Esophagus muscularis mucosa (tissue), 4 donors: ENCODE measurements at regions of chr7 and their contacts with region 1.

Region 1: GRCh38 chr7:123709525-123709924 is 39.3 kb downstream of the WASL start:
- DNase-seq: no peak
- H3K4me3 ChIP-seq: no peak overlapping the region
- H3K27ac ChIP-seq: no peak overlapping the region
- H3K4me1 ChIP-seq: peaks cover 19 to 31% (median 27%) of the 10 kb centered on the region in 4 donors
- H3K27me3 ChIP-seq: no peaks in the 10 kb centered on the region
- CTCF ChIP-seq: no peak
- EP300 ChIP-seq: no peak
- POLR2A ChIP-seq: no peak

Region 2: GRCh38 chr7:123437447-123437995 is 272.0 kb before region 1 on chr7:
- intact Hi-C with region 1: no loop called
- DNase-seq: no peak
- H3K4me3 ChIP-seq: no peak overlapping the region
- H3K27ac ChIP-seq: no peak overlapping the region
- H3K4me1 ChIP-seq: peaks cover 0 to 15% (median 9%) of the 10 kb centered on the region in 4 donors
- H3K27me3 ChIP-seq: no peaks in the 10 kb centered on the region
- CTCF ChIP-seq: no peak
- EP300 ChIP-seq: no peak
- POLR2A ChIP-seq: no peak

Region 3: DNA sequence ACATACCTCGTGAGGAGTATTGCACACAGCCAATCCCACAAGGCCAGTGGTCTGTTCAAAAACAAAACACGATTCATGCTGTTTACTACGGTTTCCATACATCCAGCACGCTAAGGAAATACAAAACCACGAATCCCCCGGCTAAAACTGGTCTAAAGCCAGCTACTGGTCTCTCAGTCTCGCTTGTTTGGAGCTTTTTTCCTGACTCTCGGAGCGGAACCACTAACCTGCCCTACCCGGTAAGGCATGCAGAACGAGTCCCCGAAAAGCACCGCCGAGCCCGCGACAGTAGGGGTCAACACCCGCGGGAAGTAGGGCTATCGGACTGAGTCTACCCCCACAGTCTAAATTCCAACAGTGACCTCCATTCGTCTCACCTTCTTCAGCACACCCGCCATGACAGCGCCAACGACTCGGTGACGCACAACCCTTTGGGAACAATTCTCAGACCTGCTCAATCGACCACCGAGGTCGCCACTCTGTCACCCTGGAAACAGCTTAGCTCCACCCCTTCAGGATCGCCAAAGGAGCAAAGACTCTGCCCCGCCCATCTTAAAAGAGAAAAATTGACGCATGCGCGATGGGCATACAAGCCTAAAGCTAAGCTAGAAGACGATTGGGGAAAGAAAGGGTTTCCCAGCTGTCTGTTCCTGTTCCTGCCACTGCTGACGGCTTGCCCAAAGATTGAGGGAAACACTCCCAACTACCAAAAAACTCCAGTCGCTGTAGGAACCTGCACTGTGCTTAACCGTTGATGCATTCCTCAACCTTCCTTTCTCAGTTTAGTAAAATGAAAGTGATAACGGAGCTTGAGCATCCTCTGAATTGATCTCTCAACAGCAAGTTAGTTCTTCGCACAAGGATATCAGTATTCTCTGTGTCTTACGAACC is 151.9 kb before region 1 on chr7 and contains the start of gene NDUFA5:
- intact Hi-C with region 1: no loop called
- DNase-seq: peak; percentile 99
- H3K4me3 ChIP-seq: peak within 1 kb of the TSS; percentile 70 to 94 (median 84)
- H3K27ac ChIP-seq: peak within 1 kb of the TSS; percentile 89 to 91 (median 90)
- H3K4me1 ChIP-seq: peaks cover 32 to 48% (median 44%) of the 10 kb centered on the region in 4 donors
- H3K27me3 ChIP-seq: no peaks in the 10 kb centered on the region
- CTCF ChIP-seq: peak in 1 of 3 experiments; percentile 15
- EP300 ChIP-seq: no peak
- POLR2A ChIP-seq: peak; percentile 71
- total RNA-seq, gene NDUFA5: 70.7 to 109 (median 79.7) TPM

Region 4: GRCh38 chr7:123580406-123581161 is 128.9 kb before region 1 on chr7:
- intact Hi-C with region 1: loop called (anchors 5 kb)
- DNase-seq: no peak
- H3K4me3 ChIP-seq: no peak overlapping the region
- H3K27ac ChIP-seq: no peak overlapping the region
- H3K4me1 ChIP-seq: no peaks in the 10 kb centered on the region
- H3K27me3 ChIP-seq: no peaks in the 10 kb centered on the region
- CTCF ChIP-seq: peak; percentile 44 to 67 (median 47)
- EP300 ChIP-seq: no peak
- POLR2A ChIP-seq: no peak